Activated CD4-positive, alpha-beta T cell treated with anti-CD3 and anti-CD28 coated beads for 36 hours (primary cell): ENCODE measurements at regions of chr17 and their contacts with region 1.

Region 1: GRCh38 chr17:1365445-1366039 is 34.5 kb downstream of the YWHAE start:
- DNase-seq: peak; percentile 74
- ATAC-seq: peak; percentile 65
- H3K4me3 Mint-ChIP-seq: peak overlapping the region; percentile 21
- H3K27ac Mint-ChIP-seq: no peak overlapping the region
- H3K4me1 Mint-ChIP-seq: peaks cover 71% of the 10 kb centered on the region
- H3K27me3 Mint-ChIP-seq: no peaks in the 10 kb centered on the region

Region 2: DNA sequence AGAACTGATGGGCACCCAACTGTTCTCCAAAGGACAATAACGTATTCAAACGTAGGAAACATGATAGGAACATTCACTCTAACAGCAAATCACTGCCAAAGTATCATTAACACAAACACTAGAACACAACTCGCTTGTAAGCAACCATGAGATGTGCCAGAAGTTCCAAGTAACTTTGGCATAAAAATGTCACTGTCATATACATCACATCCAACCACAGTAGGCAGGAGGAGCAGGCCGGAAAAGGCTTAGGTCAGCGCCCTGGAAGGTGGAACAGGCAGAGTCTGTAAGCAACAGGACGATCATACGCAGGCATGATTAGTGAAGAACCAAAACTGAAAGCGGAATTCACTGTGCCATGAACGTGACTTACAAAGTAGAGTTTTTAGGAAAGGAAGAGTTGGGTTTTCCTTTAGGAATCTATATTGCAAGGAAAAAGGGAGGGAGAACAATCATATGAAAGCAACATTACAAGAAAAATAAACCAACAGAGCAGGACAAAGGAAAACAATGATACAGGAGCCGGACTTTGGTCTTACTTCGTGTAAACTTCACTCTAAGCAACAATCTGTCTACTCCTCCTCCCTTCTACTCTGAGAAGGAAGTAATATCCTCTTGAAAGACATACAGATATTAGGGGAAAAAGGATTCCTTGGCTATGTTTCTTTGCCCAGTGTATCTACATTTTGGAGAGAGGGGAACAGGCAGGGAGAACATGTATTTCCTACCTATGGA is 17.8 kb before region 1 on chr17:
- CTCF ChIA-PET with region 1: interaction called, 24 read pairs
- POLR2A ChIA-PET with region 1: interaction called, 3 read pairs
- intact Hi-C with region 1: no loop called
- DNase-seq: peak; percentile 23
- ATAC-seq: no peak
- H3K4me3 Mint-ChIP-seq: no peak overlapping the region
- H3K27ac Mint-ChIP-seq: peak overlapping the region; percentile 80
- H3K4me1 Mint-ChIP-seq: peaks cover 33% of the 10 kb centered on the region
- H3K27me3 Mint-ChIP-seq: no peaks in the 10 kb centered on the region

Region 3: GRCh38 chr17:1379930-1380313 is 14.4 kb after region 1 on chr17:
- CTCF ChIA-PET with region 1: interaction called, 121 read pairs
- POLR2A ChIA-PET with region 1: interaction called, 9 read pairs
- intact Hi-C with region 1: loop called in 1 of 2 experiments (anchors 2 kb)
- DNase-seq: peak; percentile 53
- ATAC-seq: peak; percentile 83
- H3K4me3 Mint-ChIP-seq: no peak overlapping the region
- H3K27ac Mint-ChIP-seq: peak overlapping the region; percentile 77
- H3K4me1 Mint-ChIP-seq: peaks cover 77% of the 10 kb centered on the region
- H3K27me3 Mint-ChIP-seq: no peaks in the 10 kb centered on the region

Region 4: GRCh38 chr17:1390433-1391367 is 25.2 kb after region 1 on chr17:
- CTCF ChIA-PET with region 1: interaction called, 68 read pairs
- POLR2A ChIA-PET with region 1: interaction called, 9 read pairs
- intact Hi-C with region 1: no loop called
- DNase-seq: no peak
- ATAC-seq: peak; percentile 40
- H3K4me3 Mint-ChIP-seq: peak overlapping the region; percentile 9
- H3K27ac Mint-ChIP-seq: peak overlapping the region; percentile 87
- H3K4me1 Mint-ChIP-seq: peaks cover 81% of the 10 kb centered on the region
- H3K27me3 Mint-ChIP-seq: no peaks in the 10 kb centered on the region

Region 5: DNA sequence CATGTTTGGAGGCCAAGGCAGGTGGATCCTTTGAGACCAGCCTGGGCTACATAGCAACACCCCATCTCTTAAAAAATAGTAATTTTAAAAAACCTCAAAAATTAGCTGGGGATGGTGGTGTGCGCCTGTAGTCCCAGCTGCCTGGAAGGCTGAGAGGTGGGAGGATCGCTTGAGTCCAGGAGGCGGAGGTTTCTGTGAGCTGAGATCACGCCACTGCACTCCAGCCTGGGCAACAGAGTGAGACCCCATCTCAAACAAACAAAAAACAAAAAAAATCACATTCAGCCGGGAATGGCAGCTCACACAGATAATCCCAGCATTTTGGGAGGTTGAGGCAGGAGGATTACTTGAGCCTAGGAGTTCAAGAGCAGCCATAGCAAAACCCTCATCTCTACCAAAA is 50.9 kb after region 1 on chr17:
- CTCF ChIA-PET with region 1: interaction called, 13 read pairs
- POLR2A ChIA-PET with region 1: no interaction called
- intact Hi-C with region 1: no loop called
- DNase-seq: no peak
- ATAC-seq: no peak
- H3K4me3 Mint-ChIP-seq: no peak overlapping the region
- H3K27ac Mint-ChIP-seq: no peak overlapping the region
- H3K4me1 Mint-ChIP-seq: no peaks in the 10 kb centered on the region
- H3K27me3 Mint-ChIP-seq: no peaks in the 10 kb centered on the region

Region 6: DNA sequence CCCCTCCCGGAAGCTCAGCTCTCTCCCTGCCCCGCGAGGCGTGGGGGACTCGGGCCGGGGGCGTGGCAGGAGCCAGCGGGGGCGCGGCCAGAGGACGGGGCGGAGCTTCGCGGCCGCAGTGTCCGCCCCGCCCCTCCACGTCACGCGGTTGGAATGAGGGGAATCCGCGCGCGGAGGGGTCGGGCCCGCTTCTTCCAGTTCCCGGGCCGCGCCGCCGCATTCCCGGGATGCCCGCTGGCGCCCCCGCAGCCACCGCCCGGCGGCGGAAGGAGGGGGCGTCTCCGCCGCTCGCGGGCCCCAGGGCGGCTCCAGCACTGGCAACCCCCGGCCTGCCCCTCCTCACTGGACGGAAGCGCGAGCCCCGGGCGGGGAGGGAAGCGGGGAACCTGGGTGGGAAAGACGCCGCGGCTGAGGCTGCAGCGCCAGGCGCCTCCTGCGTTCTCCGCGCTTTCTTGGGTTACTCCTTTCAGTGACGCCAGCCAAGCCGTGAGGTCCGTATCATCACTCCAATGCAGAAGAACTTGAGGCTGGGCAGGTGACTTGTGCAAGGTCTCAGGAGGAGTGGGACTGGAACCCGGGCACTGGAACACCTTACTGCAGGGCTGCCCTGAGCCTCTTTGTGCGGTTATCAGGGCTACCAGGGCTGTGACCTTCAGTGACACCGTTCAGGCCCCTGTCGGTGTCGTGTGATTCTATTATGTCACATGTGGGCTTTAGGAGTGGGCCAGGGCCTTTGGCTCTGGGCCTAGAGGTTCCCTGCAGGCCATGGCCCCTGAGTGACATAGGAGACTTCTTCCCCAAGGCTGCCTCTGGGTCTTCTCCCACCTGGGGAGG is 122.7 kb after region 1 on chr17:
- CTCF ChIA-PET with region 1: interaction called, 8 read pairs
- POLR2A ChIA-PET with region 1: no interaction called
- intact Hi-C with region 1: loop called in 1 of 2 experiments (anchors 1 kb)
- DNase-seq: peak; percentile 77
- ATAC-seq: peak; percentile 10
- H3K4me3 Mint-ChIP-seq: peak overlapping the region; percentile 71
- H3K27ac Mint-ChIP-seq: no peak overlapping the region
- H3K4me1 Mint-ChIP-seq: peaks cover 42% of the 10 kb centered on the region
- H3K27me3 Mint-ChIP-seq: no peaks in the 10 kb centered on the region